ENCODE measurements at regions of chr5 and their contacts with region 1.

Region 1: DNA sequence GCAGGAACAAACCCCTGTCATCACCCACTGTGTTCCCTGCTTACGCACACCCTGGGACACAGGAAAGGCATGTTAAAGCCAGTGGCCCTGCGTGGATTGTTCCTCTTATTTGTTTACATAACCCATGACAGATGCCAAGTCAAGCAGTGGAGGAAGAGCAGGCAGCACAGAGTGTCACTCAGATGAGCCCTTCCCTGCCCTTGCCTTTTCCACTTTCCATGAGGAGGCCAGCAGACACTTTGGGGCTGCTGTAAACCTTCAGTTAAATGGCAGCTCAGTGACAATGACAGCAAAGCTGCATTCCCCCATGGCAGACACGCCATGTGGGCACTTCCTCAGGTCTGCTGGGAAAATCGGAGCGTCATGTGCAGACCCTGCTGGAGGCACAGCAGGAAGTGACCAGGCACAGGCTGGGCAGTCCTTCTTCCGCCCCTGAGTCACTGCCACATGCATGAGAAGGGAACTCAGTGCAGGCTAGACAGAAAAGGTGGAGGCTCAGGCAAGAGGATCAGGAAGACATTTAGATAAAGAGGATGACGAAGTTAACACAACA is 216.8 kb upstream of the PIK3R1 start:
- DNase-seq: peak; percentile 49
- H3K4me3 ChIP-seq: no peak overlapping the region
- H3K27ac ChIP-seq: no peak overlapping the region
- H3K4me1 ChIP-seq: no peaks in the 10 kb centered on the region
- H3K27me3 ChIP-seq: no peaks in the 10 kb centered on the region
- CTCF ChIP-seq: no peak

Region 2: GRCh38 chr5:67971223-67971830 is 27.5 kb before region 1 on chr5:
- CTCF ChIA-PET with region 1: no interaction called
- POLR2A ChIA-PET with region 1: no interaction called
- intact Hi-C with region 1: loop called (anchors 1 kb)
- DNase-seq: peak; percentile 52
- H3K4me3 ChIP-seq: no peak overlapping the region
- H3K27ac ChIP-seq: no peak overlapping the region
- H3K4me1 ChIP-seq: peaks cover 14% of the 10 kb centered on the region
- H3K27me3 ChIP-seq: no peaks in the 10 kb centered on the region
- CTCF ChIP-seq: no peak

Measured in A673 (cell line).